Endothelial cell of umbilical vein (primary cell): ENCODE measurements at regions of chr13 and their contacts with region 1.

Region 1: DNA sequence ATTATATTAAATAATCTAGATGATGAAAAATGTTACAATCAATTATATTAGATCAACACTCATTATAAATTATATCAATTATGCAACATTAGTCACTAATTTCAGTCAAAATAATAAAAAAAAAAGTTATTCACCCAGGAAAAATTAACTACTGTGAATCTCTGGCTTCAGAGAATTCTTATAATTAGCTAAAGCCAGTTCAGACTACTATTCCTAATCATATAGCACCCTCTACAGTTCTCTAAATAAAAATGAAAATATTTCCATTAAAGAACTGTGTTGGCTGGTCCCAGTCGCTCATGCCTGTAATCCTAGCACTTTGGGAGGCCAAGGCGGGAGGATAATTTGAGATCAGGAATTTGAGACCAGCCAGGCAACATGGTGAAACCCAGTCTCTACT is 33.0 kb downstream of the XPO4 start:
- DNase-seq: peak; percentile 30
- H3K4me3 ChIP-seq: no peak overlapping the region
- H3K27ac ChIP-seq: no peak overlapping the region
- H3K4me1 ChIP-seq: peaks cover 16% of the 10 kb centered on the region
- H3K27me3 ChIP-seq: no peaks in the 10 kb centered on the region
- CTCF ChIP-seq: no peak
- POLR2A ChIP-seq: no peak

Region 2: DNA sequence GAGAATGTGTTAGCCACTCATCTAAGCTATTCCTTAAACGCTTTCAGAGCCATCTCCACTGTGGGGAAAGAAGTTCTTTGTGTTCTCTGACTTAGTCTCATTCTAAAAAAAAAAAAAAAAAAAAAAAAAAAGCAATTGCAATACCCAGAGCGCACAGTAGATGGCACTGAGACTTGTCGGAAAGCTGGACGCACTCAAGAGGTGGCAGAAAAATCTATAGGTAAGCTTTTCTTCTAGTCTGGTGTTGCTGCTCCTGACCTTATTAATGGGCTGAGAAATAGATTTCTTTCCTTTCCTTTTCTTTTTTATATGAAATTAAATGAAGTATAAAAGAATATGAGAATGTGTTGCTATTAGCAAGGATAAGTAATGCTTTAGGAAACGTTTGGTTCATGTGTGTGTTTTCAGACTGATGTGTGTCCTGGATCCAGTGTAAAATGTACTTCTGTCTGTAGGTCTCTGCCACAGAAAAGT is 672.1 kb before region 1 on chr13:
- CTCF ChIA-PET with region 1: interaction called, 11 read pairs
- POLR2A ChIA-PET with region 1: no interaction called
- dilution Hi-C with region 1: no loop called
- intact Hi-C with region 1: no loop called
- DNase-seq: peak; percentile 54
- H3K4me3 ChIP-seq: no peak overlapping the region
- H3K27ac ChIP-seq: no peak overlapping the region
- H3K4me1 ChIP-seq: no peaks in the 10 kb centered on the region
- H3K27me3 ChIP-seq: peaks cover 45 to 68% of the 10 kb centered on the region in 2 experiments
- CTCF ChIP-seq: peak; percentile 64 to 75
- POLR2A ChIP-seq: no peak

Region 3: GRCh38 chr13:20703780-20704445 is 165.6 kb before region 1 on chr13:
- CTCF ChIA-PET with region 1: interaction called, 25 read pairs
- POLR2A ChIA-PET with region 1: no interaction called
- dilution Hi-C with region 1: no loop called
- intact Hi-C with region 1: no loop called
- DNase-seq: peak; percentile 66
- H3K4me3 ChIP-seq: peak overlapping the region in 2 of 3 experiments; percentile 49 to 52
- H3K27ac ChIP-seq: no peak overlapping the region
- H3K4me1 ChIP-seq: peaks cover 8% of the 10 kb centered on the region
- H3K27me3 ChIP-seq: no peaks in the 10 kb centered on the region
- CTCF ChIP-seq: peak; percentile 64 to 69
- POLR2A ChIP-seq: peak; percentile 26

Region 4: GRCh38 chr13:20713751-20714150 is 155.8 kb before region 1 on chr13:
- CTCF ChIA-PET with region 1: interaction called, 13 read pairs
- POLR2A ChIA-PET with region 1: no interaction called
- dilution Hi-C with region 1: no loop called
- intact Hi-C with region 1: loop called (anchors 1 kb)
- DNase-seq: peak; percentile 38
- H3K4me3 ChIP-seq: no peak overlapping the region
- H3K27ac ChIP-seq: peak overlapping the region; percentile 56
- H3K4me1 ChIP-seq: peaks cover 38% of the 10 kb centered on the region
- H3K27me3 ChIP-seq: no peaks in the 10 kb centered on the region
- CTCF ChIP-seq: no peak
- POLR2A ChIP-seq: no peak

Region 5: GRCh38 chr13:20843166-20843565 is 26.4 kb before region 1 on chr13:
- CTCF ChIA-PET with region 1: interaction called, 29 read pairs
- POLR2A ChIA-PET with region 1: no interaction called
- dilution Hi-C with region 1: no loop called
- intact Hi-C with region 1: no loop called
- DNase-seq: peak; percentile 88
- H3K4me3 ChIP-seq: no peak overlapping the region
- H3K27ac ChIP-seq: no peak overlapping the region
- H3K4me1 ChIP-seq: peaks cover 5% of the 10 kb centered on the region
- H3K27me3 ChIP-seq: no peaks in the 10 kb centered on the region
- CTCF ChIP-seq: no peak
- POLR2A ChIP-seq: no peak

Region 6: DNA sequence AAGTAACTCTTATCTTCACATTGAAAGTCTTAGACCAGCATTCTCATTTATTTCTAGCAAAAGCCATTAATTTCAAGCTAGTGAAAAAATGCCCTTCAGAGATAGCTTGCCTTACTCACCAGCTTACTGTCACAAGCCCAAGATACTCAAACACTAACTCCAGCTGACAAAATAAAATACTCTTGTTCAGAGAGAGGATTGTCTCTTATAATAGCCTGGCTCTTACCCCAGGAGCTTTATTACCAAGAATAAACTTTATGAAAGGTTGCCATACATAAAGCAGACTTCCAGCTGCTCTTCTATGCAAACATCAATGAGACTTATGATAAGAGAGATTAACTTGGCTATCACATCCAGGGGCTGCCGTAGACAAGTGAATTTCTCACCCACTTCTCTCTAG is 20.6 kb before region 1 on chr13:
- CTCF ChIA-PET with region 1: interaction called, 29 read pairs
- POLR2A ChIA-PET with region 1: no interaction called
- dilution Hi-C with region 1: no loop called
- intact Hi-C with region 1: no loop called
- DNase-seq: no peak
- H3K4me3 ChIP-seq: no peak overlapping the region
- H3K27ac ChIP-seq: no peak overlapping the region
- H3K4me1 ChIP-seq: no peaks in the 10 kb centered on the region
- H3K27me3 ChIP-seq: no peaks in the 10 kb centered on the region
- CTCF ChIP-seq: no peak
- POLR2A ChIP-seq: no peak

Region 7: DNA sequence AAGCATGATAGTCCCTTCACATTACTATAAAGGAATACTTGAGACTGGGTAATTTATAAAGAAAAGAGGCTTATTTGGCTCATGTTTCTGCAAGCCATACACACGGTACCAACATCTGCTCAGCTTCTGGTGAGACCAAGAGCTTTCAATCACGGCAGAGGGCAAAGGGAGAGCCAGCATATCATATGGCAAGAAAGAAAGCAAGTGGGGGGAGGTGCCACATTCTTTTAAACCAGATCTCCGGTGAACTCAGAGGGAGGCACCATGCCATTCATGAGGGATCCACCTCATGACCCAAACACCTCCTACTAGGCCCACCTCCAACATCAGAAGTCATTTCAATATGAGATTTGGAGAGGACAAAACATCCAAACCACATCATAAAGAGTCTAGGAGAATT is 12.7 kb after region 1 on chr13:
- CTCF ChIA-PET with region 1: interaction called, 8 read pairs
- POLR2A ChIA-PET with region 1: no interaction called
- dilution Hi-C with region 1: no loop called
- intact Hi-C with region 1: loop called (anchors 1 kb)
- DNase-seq: no peak
- H3K4me3 ChIP-seq: no peak overlapping the region
- H3K27ac ChIP-seq: no peak overlapping the region
- H3K4me1 ChIP-seq: peaks cover 15% of the 10 kb centered on the region
- H3K27me3 ChIP-seq: no peaks in the 10 kb centered on the region
- CTCF ChIP-seq: no peak
- POLR2A ChIP-seq: no peak

Region 8: DNA sequence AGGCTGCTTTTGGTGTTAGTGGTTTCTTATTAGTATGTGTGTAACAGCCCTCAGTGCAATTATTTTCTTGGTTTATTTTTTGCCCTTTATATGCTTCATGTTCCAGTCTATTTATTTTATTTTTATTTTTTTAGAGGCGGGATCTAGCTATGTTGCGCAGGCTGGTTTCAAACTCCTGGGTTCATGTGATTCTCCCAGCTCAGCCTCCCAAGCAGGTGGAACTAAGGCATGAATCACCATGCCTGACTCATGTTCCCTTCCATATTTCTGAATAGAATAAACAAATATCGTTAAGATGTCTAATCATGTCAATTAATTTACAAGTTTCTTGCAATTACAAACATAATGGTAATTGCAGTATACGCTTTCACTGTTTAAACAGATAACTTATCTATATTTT is 295.1 kb after region 1 on chr13:
- CTCF ChIA-PET with region 1: no interaction called
- POLR2A ChIA-PET with region 1: no interaction called
- dilution Hi-C with region 1: no loop called
- intact Hi-C with region 1: no loop called
- DNase-seq: peak; percentile 40
- H3K4me3 ChIP-seq: no peak overlapping the region
- H3K27ac ChIP-seq: no peak overlapping the region
- H3K4me1 ChIP-seq: peaks cover 3% of the 10 kb centered on the region
- H3K27me3 ChIP-seq: no peaks in the 10 kb centered on the region
- CTCF ChIP-seq: no peak
- POLR2A ChIP-seq: no peak

Region 9: DNA sequence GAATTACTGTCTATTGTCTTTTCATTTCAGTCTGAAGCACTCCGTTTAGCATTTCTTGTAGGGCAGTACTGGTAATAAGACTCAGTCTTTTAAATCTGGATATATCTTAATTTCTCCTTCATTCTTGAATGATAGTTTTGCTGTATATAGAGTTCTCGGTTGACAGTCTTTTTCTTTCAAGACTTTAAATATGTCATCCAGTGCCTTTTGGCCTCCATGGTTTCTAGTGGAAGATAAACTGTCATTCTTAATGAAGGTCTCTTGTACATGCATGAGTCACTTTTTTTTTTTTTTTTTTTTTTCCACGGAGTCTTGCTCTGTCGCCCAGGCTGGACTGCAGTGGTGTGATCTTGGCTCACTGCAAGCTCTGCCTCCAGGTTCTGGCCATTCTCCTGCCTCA is 616.8 kb after region 1 on chr13:
- CTCF ChIA-PET with region 1: no interaction called
- POLR2A ChIA-PET with region 1: no interaction called
- dilution Hi-C with region 1: no loop called
- intact Hi-C with region 1: no loop called
- DNase-seq: no peak
- H3K4me3 ChIP-seq: no peak overlapping the region
- H3K27ac ChIP-seq: no peak overlapping the region
- H3K4me1 ChIP-seq: no peaks in the 10 kb centered on the region
- H3K27me3 ChIP-seq: no peaks in the 10 kb centered on the region
- CTCF ChIP-seq: no peak
- POLR2A ChIP-seq: no peak